ENCODE measurements at regions of chr6 and their contacts with region 1.

Region 1: GRCh38 chr6:29589423-29590048 is 4.6 kb downstream of the OR2H2 start:
- DNase-seq: peak; percentile 33
- ATAC-seq: peak; percentile 82
- H3K4me3 ChIP-seq: no peak overlapping the region
- H3K27ac ChIP-seq: no peak overlapping the region
- H3K4me1 ChIP-seq: no peaks in the 10 kb centered on the region
- H3K27me3 ChIP-seq: 0 out of 2 replicates have a peak, but pooled peaks cover 6% of the 10 kb centered on the region
- CTCF ChIP-seq: peak; percentile 81 to 99 (median 88)
- POLR2A ChIP-seq: no peak
- RAD21 ChIP-seq: peak; percentile 95

Region 2: DNA sequence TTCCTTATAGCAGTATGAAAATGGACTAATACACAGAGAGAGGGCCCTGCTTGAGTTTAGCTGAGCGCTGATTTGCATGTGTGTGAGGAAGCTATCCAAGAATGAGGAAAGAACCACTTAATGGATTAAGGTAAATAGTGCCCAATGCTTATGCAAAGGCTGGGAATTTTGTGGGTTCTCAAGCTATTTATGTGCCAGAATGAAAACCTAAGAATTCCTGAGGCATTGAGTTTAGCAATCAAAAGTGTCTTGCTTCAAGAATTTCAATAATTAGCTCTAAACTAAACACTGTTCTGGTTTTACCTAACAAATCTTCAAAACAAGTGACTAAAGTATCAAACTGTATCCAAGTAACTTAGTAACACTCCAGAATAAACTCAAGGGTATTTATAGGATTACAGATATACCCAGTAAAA is 295.0 kb before region 1 on chr6:
- CTCF ChIA-PET with region 1: no interaction called
- POLR2A ChIA-PET with region 1: no interaction called
- RAD21 ChIA-PET with region 1: no interaction called
- intact Hi-C with region 1: no loop called
- DNase-seq: no peak
- ATAC-seq: no peak
- H3K4me3 ChIP-seq: no peak overlapping the region
- H3K27ac ChIP-seq: no peak overlapping the region
- H3K4me1 ChIP-seq: no peaks in the 10 kb centered on the region
- H3K27me3 ChIP-seq: no peaks in the 10 kb centered on the region
- CTCF ChIP-seq: no peak
- POLR2A ChIP-seq: no peak
- RAD21 ChIP-seq: no peak

Region 3: GRCh38 chr6:29376003-29376402 is 213.5 kb before region 1 on chr6:
- CTCF ChIA-PET with region 1: interaction called, 40 read pairs
- POLR2A ChIA-PET with region 1: no interaction called
- RAD21 ChIA-PET with region 1: interaction called in 1 of 2 experiments, 3 read pairs
- intact Hi-C with region 1: loop called (anchors 1 kb)
- DNase-seq: peak; percentile 19
- ATAC-seq: peak; percentile 73; the same call in 1 of the 2 replicates
- H3K4me3 ChIP-seq: no peak overlapping the region
- H3K27ac ChIP-seq: no peak overlapping the region
- H3K4me1 ChIP-seq: no peaks in the 10 kb centered on the region
- H3K27me3 ChIP-seq: no peaks in the 10 kb centered on the region
- CTCF ChIP-seq: peak in 2 of 3 experiments; percentile 17 to 49; a peak in 2 of 6 replicates
- POLR2A ChIP-seq: no peak
- RAD21 ChIP-seq: peak; percentile 58

Region 4: DNA sequence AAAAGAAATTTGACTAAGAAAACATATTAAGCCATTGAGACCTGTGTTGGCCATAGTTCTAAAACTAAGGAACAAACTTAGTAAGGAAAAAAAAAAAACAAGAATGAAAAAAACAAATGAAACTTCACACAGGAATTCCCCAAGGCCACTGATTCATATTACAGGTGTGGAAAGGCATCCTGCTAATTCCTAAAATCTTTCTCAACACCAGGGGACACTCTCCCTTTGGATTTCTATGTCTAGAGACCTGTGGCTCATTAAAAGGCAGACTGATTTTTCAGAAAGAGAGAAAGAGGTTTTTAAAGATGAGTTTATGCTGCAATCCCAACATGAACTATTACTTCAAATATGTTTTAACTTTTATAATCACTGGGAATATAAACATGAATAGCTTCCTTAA is 174.9 kb before region 1 on chr6 and contains the start of gene OR12D1:
- CTCF ChIA-PET with region 1: no interaction called
- POLR2A ChIA-PET with region 1: no interaction called
- RAD21 ChIA-PET with region 1: no interaction called
- intact Hi-C with region 1: loop called (anchors 1 kb)
- DNase-seq: peak; percentile 16
- ATAC-seq: peak; percentile 65
- H3K4me3 ChIP-seq: no peak within 1 kb of the TSS
- H3K27ac ChIP-seq: no peak within 1 kb of the TSS
- H3K4me1 ChIP-seq: no peaks in the 10 kb centered on the region
- H3K27me3 ChIP-seq: no peaks in the 10 kb centered on the region
- CTCF ChIP-seq: peak; percentile 35 to 55 (median 38); a peak in 3 of 6 replicates
- POLR2A ChIP-seq: no peak
- RAD21 ChIP-seq: peak; percentile 66
- total RNA-seq, gene OR12D1: not detected

Measured in HCT116 (cell line).